ENCODE measurements at regions of chr20 and their contacts with region 1.

Region 1: GRCh38 chr20:41249406-41250281 is 67.9 kb downstream of the ZHX3 start:
- DNase-seq: peak; percentile 54 to 94 (median 62)

Region 2: GRCh38 chr20:41136680-41137613 is 112.7 kb before region 1 on chr20 and contains the start of gene PLCG1:
- intact Hi-C with region 1: no loop called
- DNase-seq: peak; percentile 81 to 99 (median 92)

Region 3: DNA sequence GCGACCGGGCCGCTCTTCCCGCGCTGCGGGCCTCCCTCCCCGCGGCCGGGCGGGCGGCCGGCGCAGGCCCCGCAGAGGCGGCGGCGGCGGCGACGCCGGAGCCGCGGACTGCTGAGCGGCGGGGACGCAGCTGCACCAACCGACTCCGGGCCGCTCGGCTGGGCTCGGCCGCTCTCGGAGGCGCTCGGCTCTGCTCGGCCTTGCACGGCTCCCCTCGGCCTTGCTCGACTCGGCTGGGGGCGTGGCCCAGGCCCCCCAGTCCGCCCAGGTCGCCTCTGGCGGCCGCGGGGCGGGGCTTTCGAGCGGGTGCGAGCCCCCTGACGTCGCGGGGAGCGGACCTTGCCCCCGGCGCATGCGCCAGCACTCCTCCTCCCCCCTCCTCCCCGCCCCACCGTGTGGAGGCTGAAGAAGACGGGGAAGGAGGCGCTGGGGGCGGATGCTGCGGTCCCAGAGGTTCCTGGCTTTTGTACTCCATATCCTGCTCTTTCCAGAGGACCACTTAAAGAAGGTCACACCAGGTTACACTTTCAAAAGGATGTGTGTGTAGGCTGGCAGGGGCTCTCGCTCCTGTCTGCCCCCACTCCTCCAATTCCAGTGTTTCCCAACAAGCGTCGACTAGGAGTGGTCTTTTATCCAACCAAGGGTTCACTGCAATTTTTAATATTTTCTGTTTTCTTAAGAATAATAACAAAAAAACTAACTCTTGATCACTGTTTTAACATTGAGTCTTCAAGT is 68.1 kb after region 1 on chr20 and contains the start of gene ZHX3:
- intact Hi-C with region 1: loop called (anchors 2 kb)
- DNase-seq: peak; percentile 92 to 99 (median 95)